PC-3 (cell line): ENCODE measurements at regions of chrX and their contacts with region 1.

Region 1: DNA sequence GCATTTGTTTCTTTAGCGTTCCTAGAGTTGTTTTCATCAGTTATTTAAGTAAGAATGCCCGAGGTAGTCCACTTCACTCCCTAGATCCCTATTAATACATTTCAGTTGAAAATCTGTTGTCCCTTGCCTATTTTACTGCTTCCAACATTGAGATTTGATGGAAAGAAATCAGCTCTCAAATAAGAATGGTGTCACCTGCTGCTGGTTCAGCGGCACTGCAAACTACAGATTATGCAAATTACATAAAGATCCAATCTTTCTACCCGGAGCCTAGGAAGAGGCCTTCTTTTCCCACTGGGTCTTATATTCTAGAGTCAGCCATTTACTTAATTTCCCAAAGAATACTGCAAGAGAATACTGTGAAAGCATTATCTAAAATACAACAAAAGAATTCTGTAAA is 597.6 kb upstream of the MAGEB2 start:
- DNase-seq: peak; percentile 38
- ATAC-seq: peak; percentile 76
- H3K4me3 ChIP-seq: peak overlapping the region; percentile 25; the same call in 1 of the 2 replicates
- H3K27ac ChIP-seq: peak overlapping the region; percentile 52
- H3K4me1 ChIP-seq: peaks cover 12% of the 10 kb centered on the region; the same call in 1 of the 2 replicates
- H3K27me3 ChIP-seq: no peaks in the 10 kb centered on the region
- CTCF ChIP-seq: peak; percentile 62

Region 2: DNA sequence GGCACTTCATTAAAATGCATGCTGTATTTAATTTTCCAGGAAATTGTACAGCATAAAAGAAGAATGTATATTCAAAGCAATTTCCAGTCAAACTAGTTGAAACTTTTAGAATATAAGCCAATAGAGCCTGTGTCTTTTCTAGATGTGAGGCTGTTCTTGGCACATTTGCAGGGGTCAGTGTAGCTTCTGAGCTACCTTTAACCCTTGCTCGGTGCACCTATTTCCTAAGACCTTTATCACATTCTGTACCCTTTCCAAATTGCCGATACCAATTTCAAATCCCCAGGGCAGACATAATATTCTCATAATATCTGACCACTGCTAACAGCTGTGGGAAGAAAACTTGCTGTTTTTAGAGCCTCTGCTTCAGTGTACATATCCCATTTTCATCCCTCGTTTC is 1984.4 kb before region 1 on chrX:
- CTCF ChIA-PET with region 1: no interaction called
- POLR2A ChIA-PET with region 1: interaction called, 15 read pairs
- intact Hi-C with region 1: no loop called
- DNase-seq: no peak
- ATAC-seq: no peak
- H3K4me3 ChIP-seq: no peak overlapping the region
- H3K27ac ChIP-seq: no peak overlapping the region
- H3K4me1 ChIP-seq: no peaks in the 10 kb centered on the region
- H3K27me3 ChIP-seq: no peaks in the 10 kb centered on the region
- CTCF ChIP-seq: no peak

Region 3: DNA sequence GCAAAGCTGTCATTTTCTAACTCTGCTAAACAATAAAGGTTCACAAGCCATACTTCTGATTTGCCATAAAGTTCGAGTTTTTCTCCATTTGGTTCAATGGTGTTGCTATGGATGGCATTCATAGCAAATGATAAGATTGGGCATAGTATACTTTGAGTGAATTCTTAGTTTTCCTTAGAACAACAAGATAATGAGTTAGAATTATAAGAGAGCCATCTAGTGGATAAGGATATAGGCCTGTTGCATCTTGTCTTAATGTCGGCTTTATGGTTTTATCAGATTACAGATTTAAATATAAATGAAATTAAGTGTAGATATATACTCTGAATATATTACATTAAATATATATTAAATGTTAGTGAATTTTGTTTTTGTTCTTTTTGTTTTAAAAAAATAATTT is 385.9 kb before region 1 on chrX:
- CTCF ChIA-PET with region 1: no interaction called
- POLR2A ChIA-PET with region 1: no interaction called
- intact Hi-C with region 1: loop called (anchors 10 kb)
- DNase-seq: peak; percentile 25
- ATAC-seq: 0 out of 2 replicates have a peak, but pooled peaks have one; percentile 33
- H3K4me3 ChIP-seq: no peak overlapping the region
- H3K27ac ChIP-seq: no peak overlapping the region
- H3K4me1 ChIP-seq: peaks cover 18% of the 10 kb centered on the region
- H3K27me3 ChIP-seq: no peaks in the 10 kb centered on the region
- CTCF ChIP-seq: peak; percentile 53

Region 4: GRCh38 chrX:29241809-29242208 is 375.9 kb before region 1 on chrX:
- CTCF ChIA-PET with region 1: interaction called, 10 read pairs
- POLR2A ChIA-PET with region 1: no interaction called
- intact Hi-C with region 1: loop called (anchors 10 kb)
- DNase-seq: no peak
- ATAC-seq: no peak
- H3K4me3 ChIP-seq: no peak overlapping the region
- H3K27ac ChIP-seq: no peak overlapping the region
- H3K4me1 ChIP-seq: peaks cover 3% of the 10 kb centered on the region; the same call in 1 of the 2 replicates
- H3K27me3 ChIP-seq: no peaks in the 10 kb centered on the region
- CTCF ChIP-seq: no peak

Region 5: DNA sequence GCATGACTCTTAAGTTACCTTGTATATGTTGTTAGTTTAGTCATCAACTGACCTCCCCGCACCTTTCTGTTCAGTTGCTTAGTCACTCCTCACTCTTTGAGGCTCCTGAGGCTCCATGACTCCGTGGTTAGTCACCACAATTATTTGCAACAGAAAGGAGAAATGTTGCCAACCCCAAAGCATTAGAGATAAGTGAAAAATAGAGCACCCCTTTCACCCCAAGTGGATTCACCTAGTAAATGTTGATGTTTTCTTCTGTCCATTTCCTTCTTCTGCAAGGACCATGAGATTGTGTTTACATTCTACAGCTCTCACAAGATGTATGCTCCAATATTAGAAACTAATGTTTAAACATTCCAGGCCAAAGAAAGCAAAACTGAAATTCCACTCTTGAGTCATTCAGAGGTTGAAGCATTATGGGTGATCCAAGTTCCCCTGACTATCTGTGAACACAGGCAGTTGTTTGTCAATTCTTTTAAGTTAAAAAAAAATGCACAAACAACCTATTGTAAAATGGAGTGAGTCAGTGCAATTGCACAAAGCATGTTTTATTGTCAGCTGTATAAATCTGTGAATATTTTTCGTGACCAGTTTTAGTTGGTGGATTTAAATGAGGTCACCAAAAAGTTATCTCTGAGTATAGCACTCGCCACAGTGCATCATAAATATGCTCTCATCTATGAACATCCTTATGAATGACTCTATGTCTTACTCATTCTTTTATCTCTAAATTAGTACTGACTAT is 45.2 kb after region 1 on chrX:
- CTCF ChIA-PET with region 1: no interaction called
- POLR2A ChIA-PET with region 1: no interaction called
- intact Hi-C with region 1: loop called (anchors 5 kb)
- DNase-seq: peak; percentile 95
- ATAC-seq: peak; percentile 84
- H3K4me3 ChIP-seq: peak overlapping the region; percentile 45
- H3K27ac ChIP-seq: peak overlapping the region; percentile 100
- H3K4me1 ChIP-seq: peaks cover 44% of the 10 kb centered on the region
- H3K27me3 ChIP-seq: no peaks in the 10 kb centered on the region
- CTCF ChIP-seq: no peak